ENCODE measurements at regions of chr20 and their contacts with region 1.

Region 1: GRCh38 chr20:50987592-50988210 is 29.1 kb downstream of the MOCS3 start:
- DNase-seq: peak; percentile 19 to 86 (median 41)
- ATAC-seq: peak; percentile 97
- H3K4me3 ChIP-seq: no peak overlapping the region
- H3K4me3 Mint-ChIP-seq: no peak overlapping the region
- H3K27ac ChIP-seq: no peak overlapping the region
- H3K27ac Mint-ChIP-seq: no peak overlapping the region
- H3K4me1 ChIP-seq: no peaks in the 10 kb centered on the region
- H3K4me1 Mint-ChIP-seq: peaks cover 4% of the 10 kb centered on the region
- H3K27me3 ChIP-seq: peaks cover 5 to 12% of the 10 kb centered on the region in 2 experiments
- H3K27me3 Mint-ChIP-seq: peaks cover 42% of the 10 kb centered on the region
- CTCF ChIP-seq: peak; percentile 95

Region 2: DNA sequence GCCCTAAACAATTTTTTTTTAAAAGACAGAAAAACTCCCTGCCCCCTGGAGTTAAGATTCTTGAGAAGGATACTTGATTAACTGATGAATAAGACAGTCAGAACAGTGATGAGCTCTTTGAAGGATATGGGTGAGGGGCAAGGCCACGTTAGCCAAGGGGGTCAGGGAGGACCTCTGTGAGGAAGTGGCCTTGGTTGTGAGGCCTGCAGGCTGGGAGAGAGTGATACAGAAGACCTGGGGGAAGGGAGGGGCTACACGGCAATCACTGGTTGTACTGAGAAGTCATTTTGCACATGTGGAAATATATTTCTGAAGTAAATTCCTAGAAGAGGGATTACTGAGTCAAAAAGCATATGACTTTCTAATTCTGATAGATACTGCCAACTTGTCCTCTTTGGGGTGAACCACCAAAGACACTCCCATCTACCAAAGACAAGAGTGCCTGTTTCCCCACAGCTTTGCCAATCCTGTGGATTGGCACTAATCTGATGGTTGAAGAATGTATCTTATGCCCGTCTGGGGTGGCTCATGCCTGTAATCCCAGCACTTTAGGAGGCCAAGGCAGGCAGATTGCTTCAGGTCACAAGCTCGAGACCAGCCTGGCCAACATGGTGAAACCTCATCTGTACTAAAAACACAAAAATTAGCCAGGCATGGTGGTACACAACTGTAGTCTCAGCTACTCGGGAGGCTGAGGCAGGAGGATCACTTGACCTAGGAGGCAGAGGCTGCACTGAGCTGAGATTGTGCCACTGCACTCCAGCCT is 215.1 kb before region 1 on chr20:
- CTCF ChIA-PET with region 1: no interaction called
- POLR2A ChIA-PET with region 1: no interaction called
- intact Hi-C with region 1: no loop called
- DNase-seq: no peak
- ATAC-seq: no peak
- H3K4me3 ChIP-seq: no peak overlapping the region
- H3K4me3 Mint-ChIP-seq: no peak overlapping the region
- H3K27ac ChIP-seq: no peak overlapping the region
- H3K27ac Mint-ChIP-seq: no peak overlapping the region
- H3K4me1 ChIP-seq: no peaks in the 10 kb centered on the region
- H3K4me1 Mint-ChIP-seq: no peaks in the 10 kb centered on the region
- H3K27me3 ChIP-seq: no peaks in the 10 kb centered on the region
- H3K27me3 Mint-ChIP-seq: no peaks in the 10 kb centered on the region
- CTCF ChIP-seq: no peak

Region 3: DNA sequence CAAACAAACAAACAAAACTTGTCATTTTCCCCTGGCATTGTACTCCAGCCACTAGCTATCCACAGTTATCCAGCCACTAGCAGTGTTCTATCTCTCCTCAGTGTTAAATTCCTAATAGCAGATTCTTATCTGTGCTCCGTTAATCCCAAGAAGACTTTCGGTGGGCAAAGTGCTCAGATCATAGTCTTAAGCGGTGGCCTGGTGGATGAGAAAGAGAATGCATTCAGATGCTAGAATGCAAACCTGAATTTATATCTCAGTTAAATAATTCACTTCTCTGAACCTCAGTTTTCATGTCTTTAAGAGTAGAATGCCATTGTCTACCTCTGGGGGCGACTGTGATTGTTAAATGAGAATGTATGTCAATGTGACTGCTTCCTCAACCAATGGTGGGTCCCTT is 82.9 kb after region 1 on chr20:
- CTCF ChIA-PET with region 1: no interaction called
- POLR2A ChIA-PET with region 1: no interaction called
- intact Hi-C with region 1: no loop called
- DNase-seq: no peak
- ATAC-seq: no peak
- H3K4me3 ChIP-seq: no peak overlapping the region
- H3K4me3 Mint-ChIP-seq: no peak overlapping the region
- H3K27ac ChIP-seq: no peak overlapping the region
- H3K27ac Mint-ChIP-seq: no peak overlapping the region
- H3K4me1 ChIP-seq: no peaks in the 10 kb centered on the region
- H3K4me1 Mint-ChIP-seq: no peaks in the 10 kb centered on the region
- H3K27me3 ChIP-seq: peaks cover 15 to 25% of the 10 kb centered on the region in 2 experiments
- H3K27me3 Mint-ChIP-seq: peaks cover 67% of the 10 kb centered on the region
- CTCF ChIP-seq: no peak

Region 4: DNA sequence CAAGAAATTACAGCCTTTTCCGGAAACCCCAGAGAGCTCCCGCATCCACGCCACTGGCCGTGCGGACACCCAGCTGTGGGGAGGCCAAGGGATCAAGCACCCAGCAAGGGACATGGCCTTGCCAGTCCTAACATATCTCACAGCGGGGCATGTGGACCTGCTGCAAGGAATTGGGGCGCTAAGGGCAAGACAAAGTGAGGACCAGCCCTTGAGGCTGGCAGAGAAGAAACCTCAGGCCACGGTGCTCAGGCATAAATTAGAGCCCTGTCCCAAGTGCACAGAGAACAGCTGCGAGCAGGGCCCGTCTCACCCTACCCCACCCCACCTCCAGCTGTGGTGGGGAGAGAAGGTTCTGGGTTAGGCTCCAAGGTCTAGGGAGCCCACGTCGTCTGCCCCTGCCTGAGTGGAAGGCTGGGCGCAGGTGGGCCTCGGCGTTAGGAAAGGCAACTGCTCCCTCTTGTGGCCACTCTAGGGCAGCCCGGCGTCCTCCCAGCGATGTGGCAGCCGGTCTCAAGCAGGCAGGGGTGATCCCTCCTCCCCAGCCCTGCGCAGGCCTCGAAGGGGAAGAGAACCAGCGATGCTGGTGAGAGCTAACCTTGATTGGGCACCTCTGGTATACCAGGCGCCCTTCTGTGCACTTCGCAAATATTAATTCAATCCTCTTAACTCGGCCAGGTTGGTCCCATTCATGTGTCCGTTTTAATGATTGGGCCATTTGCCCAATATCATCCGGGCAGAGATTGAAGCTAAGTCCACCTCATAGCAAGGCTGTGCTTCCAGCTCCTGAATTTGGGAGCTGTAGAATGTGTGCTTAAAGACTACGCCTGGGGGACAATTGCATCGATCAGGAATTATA is 319.0 kb after region 1 on chr20:
- CTCF ChIA-PET with region 1: interaction called, 29 read pairs
- POLR2A ChIA-PET with region 1: interaction called, 6 read pairs
- intact Hi-C with region 1: loop called (anchors 1 kb)
- DNase-seq: peak; percentile 37 to 81 (median 62)
- ATAC-seq: peak; percentile 90
- H3K4me3 ChIP-seq: no peak overlapping the region
- H3K4me3 Mint-ChIP-seq: no peak overlapping the region
- H3K27ac ChIP-seq: no peak overlapping the region
- H3K27ac Mint-ChIP-seq: no peak overlapping the region
- H3K4me1 ChIP-seq: peaks cover 6% of the 10 kb centered on the region
- H3K4me1 Mint-ChIP-seq: no peaks in the 10 kb centered on the region
- H3K27me3 ChIP-seq: peaks cover 0 to 5% of the 10 kb centered on the region in 2 experiments
- H3K27me3 Mint-ChIP-seq: peaks cover 34% of the 10 kb centered on the region
- CTCF ChIP-seq: peak; percentile 81

Region 5: GRCh38 chr20:51595058-51595532 is 607.4 kb after region 1 on chr20:
- CTCF ChIA-PET with region 1: interaction called, 4 read pairs
- POLR2A ChIA-PET with region 1: interaction called, 3 read pairs
- intact Hi-C with region 1: loop called (anchors 10 kb)
- DNase-seq: peak; percentile 55 to 86 (median 74)
- ATAC-seq: peak; percentile 96
- H3K4me3 ChIP-seq: no peak overlapping the region
- H3K4me3 Mint-ChIP-seq: peak overlapping the region; percentile 23
- H3K27ac ChIP-seq: no peak overlapping the region
- H3K27ac Mint-ChIP-seq: no peak overlapping the region
- H3K4me1 ChIP-seq: peaks cover 7% of the 10 kb centered on the region
- H3K4me1 Mint-ChIP-seq: peaks cover 13% of the 10 kb centered on the region
- H3K27me3 ChIP-seq: no peaks in the 10 kb centered on the region
- H3K27me3 Mint-ChIP-seq: no peaks in the 10 kb centered on the region
- CTCF ChIP-seq: peak; percentile 83

Region 6: GRCh38 chr20:52083627-52084232 is 1096.0 kb after region 1 on chr20:
- CTCF ChIA-PET with region 1: no interaction called
- POLR2A ChIA-PET with region 1: no interaction called
- intact Hi-C with region 1: loop called in 1 of 2 experiments (anchors 10 kb)
- DNase-seq: peak in 6 of 14 experiments; percentile 10 to 55 (median 40)
- ATAC-seq: no peak
- H3K4me3 ChIP-seq: no peak overlapping the region
- H3K4me3 Mint-ChIP-seq: no peak overlapping the region
- H3K27ac ChIP-seq: no peak overlapping the region
- H3K27ac Mint-ChIP-seq: no peak overlapping the region
- H3K4me1 ChIP-seq: no peaks in the 10 kb centered on the region
- H3K4me1 Mint-ChIP-seq: no peaks in the 10 kb centered on the region
- H3K27me3 ChIP-seq: no peaks in the 10 kb centered on the region
- H3K27me3 Mint-ChIP-seq: no peaks in the 10 kb centered on the region
- CTCF ChIP-seq: peak; percentile 25

Measured in CD4-positive, alpha-beta T cell (primary cell).